GM12878 (cell line): ENCODE measurements at regions of chr19 and their contacts with region 1.

Region 1: DNA sequence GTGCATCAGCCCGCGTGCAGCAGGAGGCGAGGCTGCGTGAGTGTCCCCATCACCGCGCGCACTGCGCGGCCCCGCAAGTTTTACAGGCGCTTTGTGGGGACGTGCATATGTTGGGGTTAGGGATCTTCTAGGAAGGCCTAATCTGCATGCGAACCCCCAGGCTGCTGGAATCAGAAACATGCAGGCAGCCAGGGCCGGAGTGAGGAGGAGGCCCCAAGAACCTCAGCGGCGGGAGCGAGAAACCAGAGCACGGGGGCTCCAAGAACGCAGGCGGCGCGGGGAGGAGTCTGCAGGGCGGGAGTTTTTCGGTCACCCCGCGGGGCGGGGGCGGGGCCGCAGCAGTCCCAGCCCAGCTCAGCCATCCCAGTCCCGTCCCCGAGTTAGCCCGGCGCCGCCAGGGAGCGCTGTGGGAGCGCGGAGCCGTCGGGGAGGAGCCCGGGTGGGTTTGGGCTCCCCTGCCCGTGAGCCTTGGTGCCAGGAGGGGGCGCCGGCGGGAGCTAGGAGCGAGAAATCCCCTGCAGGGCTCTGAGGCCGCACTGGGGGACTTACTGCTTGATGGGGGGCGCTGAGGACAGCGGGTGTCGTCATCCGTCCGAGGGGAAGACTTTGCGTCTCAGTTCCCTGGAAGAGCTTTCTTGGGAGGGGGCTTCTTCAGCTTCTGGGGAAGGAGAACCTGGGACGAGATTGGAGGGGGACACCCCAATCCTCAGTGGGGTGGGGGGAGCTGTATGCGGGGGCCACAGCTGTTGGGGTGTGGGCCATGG is 933 bp upstream of the NRTN start:
- DNase-seq: peak; percentile 39
- ATAC-seq: peak; percentile 99
- H3K4me3 ChIP-seq: peak overlapping the region; percentile 6; the same call in 1 of the 2 replicates
- H3K27ac ChIP-seq: no peak overlapping the region
- H3K4me1 ChIP-seq: peaks cover 7% of the 10 kb centered on the region
- H3K27me3 ChIP-seq: no peaks in the 10 kb centered on the region; a peak in 2 of 4 replicates
- CTCF ChIP-seq: peak; percentile 92 to 99 (median 98); a peak in 5 of 6 replicates
- EP300 ChIP-seq: no peak; a peak in 1 of 4 replicates
- POLR2A ChIP-seq: no peak
- RAD21 ChIP-seq: peak; percentile 82

Region 2: DNA sequence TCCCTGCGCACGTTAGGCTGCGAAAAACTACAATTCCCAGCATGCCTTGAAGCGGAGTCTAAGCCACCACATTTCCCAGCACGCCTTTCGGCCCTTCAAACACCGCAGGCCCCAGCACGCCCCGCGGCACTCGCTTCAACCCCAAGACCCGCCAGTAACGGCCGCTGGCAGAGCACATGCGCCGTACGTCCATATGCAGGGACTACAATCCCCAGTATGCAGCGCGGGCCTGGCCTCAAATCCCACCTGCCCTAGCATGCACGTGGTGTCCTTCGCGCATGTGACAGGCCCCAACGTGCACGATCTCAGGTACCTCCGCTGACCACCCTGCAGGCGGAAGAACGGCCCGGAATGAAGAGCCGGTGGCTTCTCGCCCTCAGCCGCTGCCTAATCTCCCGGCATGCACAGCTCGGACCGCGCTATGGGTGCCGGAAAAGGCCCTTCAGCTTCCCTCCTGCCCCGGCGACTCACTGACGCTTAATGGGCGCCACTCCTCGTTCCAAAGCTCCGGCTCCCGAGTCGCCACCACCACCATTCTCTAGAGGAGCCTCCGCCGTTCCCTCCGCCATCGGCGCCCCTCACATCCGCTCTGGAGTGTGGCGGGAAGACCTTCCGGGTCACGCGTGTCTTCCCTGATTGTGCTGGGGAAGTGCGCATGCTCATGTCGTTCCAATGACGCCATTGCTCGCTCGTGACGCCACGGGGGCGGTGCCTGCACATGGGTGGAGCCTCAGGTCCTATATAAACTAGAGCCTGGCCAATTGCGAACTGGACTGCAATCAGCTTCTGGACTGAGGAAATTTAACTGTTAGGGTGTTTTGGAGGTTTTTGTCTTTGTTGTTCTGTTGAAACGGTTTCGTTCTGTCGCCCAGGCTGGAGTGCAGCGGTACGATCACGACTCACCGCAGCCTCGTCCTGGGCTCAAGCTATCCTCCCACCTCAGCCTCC is 13.1 kb before region 1 on chr19 and contains the start of gene DUS3L:
- CTCF ChIA-PET with region 1: interaction called, 25 read pairs
- POLR2A ChIA-PET with region 1: interaction called, 7 read pairs
- RAD21 ChIA-PET with region 1: interaction called, 4 read pairs
- SMC1A ChIA-PET with region 1: interaction called, 3 read pairs
- in situ Hi-C with region 1: no loop called
- intact Hi-C with region 1: no loop called
- DNase-seq: peak; percentile 98
- ATAC-seq: peak; percentile 99
- H3K4me3 ChIP-seq: peak within 1 kb of the TSS; percentile 71
- H3K27ac ChIP-seq: peak within 1 kb of the TSS; percentile 92
- H3K4me1 ChIP-seq: peaks cover 3% of the 10 kb centered on the region; the same call in 1 of the 2 replicates
- H3K27me3 ChIP-seq: no peaks in the 10 kb centered on the region
- CTCF ChIP-seq: no peak
- EP300 ChIP-seq: no peak
- POLR2A ChIP-seq: peak; percentile 93
- RAD21 ChIP-seq: no peak
- polyA plus RNA-seq, gene DUS3L: 0.64 to 1.5 TPM

Region 3: DNA sequence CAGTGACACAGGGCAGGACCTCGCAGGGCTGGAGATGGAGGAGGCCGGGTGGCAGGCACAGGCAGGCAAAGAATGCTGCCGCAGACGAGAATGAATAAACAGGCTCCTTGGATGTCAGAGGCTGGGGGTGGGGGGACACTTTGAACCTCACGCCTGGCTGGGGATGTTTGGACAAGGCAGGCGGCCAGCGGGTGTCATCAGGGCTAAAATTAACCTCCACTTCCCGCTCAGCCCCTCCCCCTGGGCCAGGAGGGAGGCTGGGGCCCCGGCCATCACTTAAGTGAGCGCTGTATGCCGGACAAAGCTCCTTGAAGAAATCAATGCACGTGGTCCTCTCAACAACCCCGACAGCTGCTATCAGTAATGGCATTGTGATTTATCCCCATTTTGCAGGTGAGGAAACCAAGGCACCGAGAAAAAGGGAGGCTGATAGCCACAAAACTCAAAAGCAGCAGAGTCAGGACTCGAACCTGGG is 76.7 kb after region 1 on chr19:
- CTCF ChIA-PET with region 1: interaction called, 4 read pairs
- POLR2A ChIA-PET with region 1: no interaction called
- RAD21 ChIA-PET with region 1: no interaction called
- SMC1A ChIA-PET with region 1: interaction called, 3 read pairs
- in situ Hi-C with region 1: no loop called
- intact Hi-C with region 1: loop called (anchors 2 kb)
- DNase-seq: no peak
- ATAC-seq: no peak
- H3K4me3 ChIP-seq: no peak overlapping the region
- H3K27ac ChIP-seq: no peak overlapping the region
- H3K4me1 ChIP-seq: no peaks in the 10 kb centered on the region
- H3K27me3 ChIP-seq: no peaks in the 10 kb centered on the region
- CTCF ChIP-seq: no peak
- EP300 ChIP-seq: no peak
- POLR2A ChIP-seq: no peak
- RAD21 ChIP-seq: no peak

Region 4: GRCh38 chr19:5967994-5968430 is 164.1 kb after region 1 on chr19:
- CTCF ChIA-PET with region 1: interaction called, 20 read pairs
- POLR2A ChIA-PET with region 1: no interaction called
- RAD21 ChIA-PET with region 1: interaction called, 14 read pairs
- SMC1A ChIA-PET with region 1: interaction called, 8 read pairs
- in situ Hi-C with region 1: no loop called
- intact Hi-C with region 1: no loop called
- DNase-seq: peak; percentile 17
- ATAC-seq: peak; percentile 91
- H3K4me3 ChIP-seq: no peak overlapping the region
- H3K27ac ChIP-seq: peak overlapping the region; percentile 53
- H3K4me1 ChIP-seq: peaks cover 12% of the 10 kb centered on the region
- H3K27me3 ChIP-seq: no peaks in the 10 kb centered on the region
- CTCF ChIP-seq: peak; percentile 80 to 92 (median 82)
- EP300 ChIP-seq: 0 out of 4 replicates have a peak, but pooled peaks of 1 of the 2 experiments have one; percentile 21
- POLR2A ChIP-seq: no peak
- RAD21 ChIP-seq: peak; percentile 73

Region 5: GRCh38 chr19:5987077-5987818 is 183.3 kb after region 1 on chr19:
- CTCF ChIA-PET with region 1: interaction called, 6 read pairs
- POLR2A ChIA-PET with region 1: no interaction called
- RAD21 ChIA-PET with region 1: interaction called, 10 read pairs
- SMC1A ChIA-PET with region 1: interaction called, 3 read pairs
- in situ Hi-C with region 1: no loop called
- intact Hi-C with region 1: no loop called
- DNase-seq: peak; percentile 19
- ATAC-seq: peak; percentile 75
- H3K4me3 ChIP-seq: peak overlapping the region; percentile 40; the same call in 1 of the 2 replicates
- H3K27ac ChIP-seq: no peak overlapping the region
- H3K4me1 ChIP-seq: peaks cover 8% of the 10 kb centered on the region
- H3K27me3 ChIP-seq: no peaks in the 10 kb centered on the region
- CTCF ChIP-seq: peak; percentile 89 to 95 (median 95)
- EP300 ChIP-seq: no peak
- POLR2A ChIP-seq: no peak
- RAD21 ChIP-seq: peak; percentile 84